OCI-LY7 (cell line): ENCODE measurements at regions of chr15 and their contacts with region 1.

Region 1: GRCh38 chr15:52735231-52736089 is 54.7 kb downstream of the ONECUT1 start:
- DNase-seq: peak; percentile 86
- H3K4me3 ChIP-seq: no peak overlapping the region
- H3K27ac ChIP-seq: no peak overlapping the region
- H3K4me1 ChIP-seq: peaks cover 31% of the 10 kb centered on the region
- CTCF ChIP-seq: peak; percentile 98

Region 2: GRCh38 chr15:52568601-52569256 is 166.7 kb before region 1 on chr15 and contains the start of gene ARPP19:
- CTCF ChIA-PET with region 1: no interaction called
- POLR2A ChIA-PET with region 1: no interaction called
- intact Hi-C with region 1: loop called (anchors 1 kb)
- DNase-seq: peak; percentile 90
- H3K4me3 ChIP-seq: peak within 1 kb of the TSS; percentile 85
- H3K27ac ChIP-seq: peak within 1 kb of the TSS; percentile 75
- H3K4me1 ChIP-seq: peaks cover 30% of the 10 kb centered on the region
- CTCF ChIP-seq: peak; percentile 58
- total RNA-seq, gene ARPP19: 48.0 and 68.3 TPM in 2 replicates

Region 3: DNA sequence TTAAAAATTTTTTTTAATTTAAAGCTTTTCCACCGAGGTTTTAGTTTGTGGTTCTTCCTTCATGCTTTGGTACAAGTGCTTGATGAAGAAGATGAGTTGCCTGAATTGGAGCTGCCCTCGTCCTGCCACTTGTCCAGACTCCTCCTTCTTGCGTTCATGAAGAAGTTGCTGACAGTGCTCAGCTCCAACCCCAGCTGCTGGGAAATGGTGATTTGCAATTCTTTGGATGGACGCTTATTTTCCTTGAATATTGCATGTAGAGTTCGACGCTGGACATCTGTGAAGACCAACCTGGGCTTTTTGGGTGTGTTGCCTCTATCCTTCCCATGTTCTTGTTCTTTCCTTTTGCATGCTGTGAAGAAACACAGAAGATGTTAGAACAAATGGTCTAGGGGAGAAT is 22.0 kb after region 1 on chr15:
- CTCF ChIA-PET with region 1: no interaction called
- POLR2A ChIA-PET with region 1: no interaction called
- intact Hi-C with region 1: no loop called
- DNase-seq: no peak
- H3K4me3 ChIP-seq: no peak overlapping the region
- H3K27ac ChIP-seq: no peak overlapping the region
- H3K4me1 ChIP-seq: no peaks in the 10 kb centered on the region
- CTCF ChIP-seq: no peak